Head of caudate nucleus (tissue), 42 donors: ENCODE measurements at regions of chr4 and their contacts with region 1.

Region 1: GRCh38 chr4:158856852-158857251 is 88.0 kb downstream of the FNIP2 start:
- DNase-seq: peak in 1 of 42 donors; percentile 17

Region 2: GRCh38 chr4:158786121-158786601 is 70.7 kb before region 1 on chr4:
- intact Hi-C with region 1: no loop called
- DNase-seq: no peak

Region 3: GRCh38 chr4:159010563-159011260 is 153.9 kb after region 1 on chr4:
- intact Hi-C with region 1: no loop called
- DNase-seq: peak in 38 of 42 donors; percentile 7 to 73 (median 34)

Region 4: DNA sequence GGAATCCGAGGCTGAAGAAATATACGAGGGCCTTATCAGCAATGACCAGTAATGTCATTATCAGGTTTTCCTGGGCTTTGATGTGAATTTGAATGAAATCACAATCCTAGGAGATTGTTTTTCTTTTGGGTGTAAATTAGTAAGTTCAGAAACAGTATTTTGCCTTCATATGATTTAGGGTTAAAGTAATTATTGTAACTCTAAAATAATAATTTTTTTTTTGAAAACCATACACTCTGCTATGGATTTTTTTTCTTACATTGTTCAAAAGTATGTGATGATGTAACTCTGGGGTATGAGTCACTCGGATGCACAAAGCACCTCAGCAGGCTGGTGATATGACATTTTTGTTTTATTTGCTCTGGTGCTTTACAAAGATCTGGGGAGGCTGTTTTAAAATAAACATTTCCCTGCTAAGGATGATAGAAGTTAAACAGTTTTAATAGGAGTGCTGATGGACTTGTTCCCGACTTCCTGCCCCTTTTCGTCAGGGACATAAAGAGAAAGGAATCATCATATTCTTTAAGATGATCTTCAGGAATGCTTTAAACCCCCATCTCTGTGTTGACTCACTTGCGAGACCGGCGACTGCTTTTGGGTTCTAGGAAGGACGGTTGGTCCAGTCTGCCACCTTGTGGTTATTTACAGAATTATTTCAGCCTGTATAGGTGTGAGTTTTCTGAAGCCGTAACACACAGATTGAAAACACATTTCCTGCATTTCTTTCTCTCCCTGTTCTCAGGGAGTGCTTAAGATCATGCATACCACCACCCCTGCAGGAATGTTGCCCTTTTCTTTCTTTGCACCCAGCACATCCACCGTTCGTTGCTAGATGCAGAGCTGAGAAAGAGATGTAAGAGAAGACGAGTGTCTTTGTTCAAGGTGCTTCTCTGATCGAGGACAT is 318.5 kb after region 1 on chr4:
- intact Hi-C with region 1: loop called (anchors 5 kb)
- DNase-seq: peak; percentile 27 to 90 (median 72)

Region 5: GRCh38 chr4:159206427-159206871 is 349.6 kb after region 1 on chr4:
- intact Hi-C with region 1: loop called (anchors 10 kb)
- DNase-seq: no peak

Region 6: DNA sequence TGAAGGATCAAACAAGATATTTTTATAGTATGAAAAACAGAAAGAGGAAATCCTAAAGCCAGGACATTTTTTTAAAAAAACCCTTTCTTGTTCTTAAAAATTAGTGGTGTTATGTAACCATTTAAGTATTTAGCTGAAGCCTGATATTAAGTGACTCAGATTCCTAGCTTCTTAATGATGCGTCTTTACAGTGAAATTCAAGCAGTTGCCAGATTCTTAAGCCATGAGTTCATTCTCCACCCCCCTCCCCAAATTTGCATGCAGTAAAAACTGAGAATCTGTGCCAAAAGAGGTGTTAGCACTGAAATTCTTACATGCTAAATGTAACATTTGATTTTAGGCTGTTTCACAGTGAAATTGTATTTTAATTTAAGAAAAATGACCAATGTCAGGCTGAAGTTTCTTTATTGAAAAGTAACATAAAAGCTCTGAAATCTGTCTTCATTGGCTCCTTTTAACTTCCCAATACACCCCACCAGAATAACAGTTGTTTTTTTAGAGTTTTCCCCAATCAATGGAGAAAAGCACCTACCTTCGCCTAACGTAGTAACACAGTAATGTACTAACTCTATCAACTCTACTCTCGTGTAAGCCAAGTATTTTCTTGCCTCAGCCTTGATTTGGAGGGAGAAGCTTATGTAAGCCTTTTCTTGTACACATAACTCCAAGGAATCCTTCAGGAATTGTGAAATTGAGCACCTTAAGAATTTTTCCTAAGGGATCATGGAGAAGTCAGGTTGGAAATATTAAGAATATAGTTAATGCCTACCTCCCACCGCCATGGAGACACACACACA is 427.0 kb after region 1 on chr4:
- intact Hi-C with region 1: no loop called
- DNase-seq: no peak

Region 7: GRCh38 chr4:159446266-159446976 is 589.6 kb after region 1 on chr4:
- intact Hi-C with region 1: loop called (anchors 10 kb)
- DNase-seq: peak in 39 of 42 donors; percentile 6 to 78 (median 44)